Posterior vena cava (tissue), 2 donors: ENCODE measurements at regions of chr12 and their contacts with region 1.

Region 1: DNA sequence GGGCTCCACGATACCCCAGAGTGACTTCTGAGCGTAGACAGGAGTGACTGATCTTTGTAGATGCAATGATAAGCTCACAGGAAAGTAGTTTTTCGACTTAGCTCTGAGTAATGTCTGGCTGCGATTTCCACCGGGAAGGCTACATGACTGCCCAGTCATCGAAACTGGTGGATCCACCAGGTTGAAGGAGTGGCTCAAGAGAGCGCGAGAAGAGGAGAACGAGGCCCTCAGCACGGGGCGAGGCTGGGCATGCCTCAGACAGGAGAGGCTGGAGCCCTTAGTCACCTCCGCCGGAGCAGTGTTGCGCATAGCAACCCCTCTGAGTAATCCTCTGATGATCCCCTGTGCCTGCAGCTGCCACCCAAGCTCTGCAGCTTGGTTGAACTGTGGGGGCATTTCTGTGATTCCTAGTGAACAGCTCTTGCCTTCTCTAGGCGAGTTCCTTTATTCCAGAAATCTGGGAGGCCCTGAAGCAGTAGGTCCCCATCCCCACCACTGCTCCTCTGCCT is 25.6 kb downstream of the ELK3 start:
- DNase-seq: no peak

Region 2: DNA sequence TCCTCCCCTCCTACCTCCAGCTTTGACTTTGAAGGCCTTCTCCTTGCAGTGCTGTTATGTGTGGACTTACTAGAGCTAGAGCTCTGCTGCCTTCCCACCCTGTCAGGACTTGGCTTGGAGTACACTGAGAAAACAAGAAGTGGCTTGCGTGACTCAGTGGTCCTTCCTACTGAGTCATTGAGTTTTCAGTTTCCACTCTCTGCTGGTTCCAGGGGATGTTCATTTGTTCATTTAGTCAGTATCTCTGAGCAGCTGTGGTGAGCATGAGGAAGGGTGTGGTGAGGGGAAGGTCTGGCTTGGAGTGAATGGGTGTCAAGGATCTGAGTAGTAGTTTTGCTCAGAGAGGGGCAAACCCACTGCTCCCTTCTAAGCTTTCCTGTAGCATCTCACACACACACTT is 42.7 kb before region 1 on chr12:
- intact Hi-C with region 1: no loop called
- DNase-seq: no peak

Region 3: DNA sequence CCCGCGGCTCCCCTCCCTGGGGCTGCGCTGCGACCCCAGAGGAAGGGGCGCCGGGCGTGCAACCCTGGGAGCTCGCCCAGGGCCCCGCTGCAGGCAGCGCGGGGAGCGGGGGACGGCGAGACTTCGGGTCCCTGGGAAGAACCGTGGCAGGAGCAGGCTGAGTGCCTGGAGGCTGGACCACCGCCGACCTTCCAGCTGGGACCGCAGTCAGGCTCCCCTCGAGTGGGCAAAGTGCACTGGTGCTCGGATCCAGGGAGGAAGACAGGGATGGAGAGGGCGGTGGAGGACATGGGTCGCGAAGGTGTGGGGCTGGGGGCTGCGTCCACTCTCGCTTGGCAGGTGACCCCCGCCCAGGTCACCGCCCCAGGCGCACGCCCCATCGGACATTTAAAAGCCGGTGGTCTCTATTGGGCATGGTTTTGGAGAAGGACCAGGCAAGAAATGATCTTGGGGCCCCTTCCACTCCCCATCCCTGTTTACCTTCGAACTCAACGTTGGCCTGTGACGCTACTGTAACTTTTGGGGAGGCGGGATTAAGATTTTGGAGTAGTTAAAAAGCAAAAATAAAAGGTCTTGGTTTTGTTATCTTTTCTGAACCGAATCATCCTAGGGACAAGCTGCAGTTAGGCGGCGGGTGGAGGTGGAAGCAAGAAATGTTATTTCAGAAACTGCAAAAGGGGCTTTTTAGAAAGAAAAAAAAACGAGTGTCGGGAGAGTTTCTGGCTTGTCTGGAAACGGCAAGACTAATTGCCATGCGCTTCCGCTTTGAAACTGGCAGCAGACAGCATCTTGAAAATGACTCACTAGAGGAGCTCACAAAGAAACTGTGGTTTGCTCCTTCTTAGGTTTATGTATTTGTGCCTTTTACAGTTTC is 24.5 kb before region 1 on chr12:
- intact Hi-C with region 1: no loop called
- DNase-seq: no peak

Region 4: GRCh38 chr12:96516472-96517430 is 297.0 kb after region 1 on chr12:
- intact Hi-C with region 1: loop called (anchors 10 kb)
- DNase-seq: peak; percentile 92

Region 5: GRCh38 chr12:97951717-97952116 is 1732.0 kb after region 1 on chr12:
- intact Hi-C with region 1: loop called in 1 of 2 experiments (anchors 5 kb)
- DNase-seq: no peak